Endothelial cell of umbilical vein (primary cell): ENCODE measurements at regions of chr5 and their contacts with region 1.

Region 1: GRCh38 chr5:139787568-139788293 is 7.9 kb upstream of the PSD2 start:
- DNase-seq: peak; percentile 82
- H3K4me3 ChIP-seq: peak overlapping the region; percentile 61 to 87 (median 83)
- H3K27ac ChIP-seq: no peak overlapping the region
- H3K4me1 ChIP-seq: peaks cover 3% of the 10 kb centered on the region
- H3K27me3 ChIP-seq: peaks cover 2% of the 10 kb centered on the region in 2 experiments
- CTCF ChIP-seq: peak; percentile 93 to 98
- POLR2A ChIP-seq: no peak

Region 2: GRCh38 chr5:139774980-139775661 is 12.6 kb before region 1 on chr5:
- CTCF ChIA-PET with region 1: interaction called, 64 read pairs
- POLR2A ChIA-PET with region 1: no interaction called
- dilution Hi-C with region 1: no loop called
- intact Hi-C with region 1: no loop called
- DNase-seq: peak; percentile 47
- H3K4me3 ChIP-seq: no peak overlapping the region
- H3K27ac ChIP-seq: no peak overlapping the region
- H3K4me1 ChIP-seq: no peaks in the 10 kb centered on the region
- H3K27me3 ChIP-seq: peaks cover 7 to 13% of the 10 kb centered on the region in 2 experiments
- CTCF ChIP-seq: peak; percentile 90 to 94
- POLR2A ChIP-seq: no peak

Region 3: DNA sequence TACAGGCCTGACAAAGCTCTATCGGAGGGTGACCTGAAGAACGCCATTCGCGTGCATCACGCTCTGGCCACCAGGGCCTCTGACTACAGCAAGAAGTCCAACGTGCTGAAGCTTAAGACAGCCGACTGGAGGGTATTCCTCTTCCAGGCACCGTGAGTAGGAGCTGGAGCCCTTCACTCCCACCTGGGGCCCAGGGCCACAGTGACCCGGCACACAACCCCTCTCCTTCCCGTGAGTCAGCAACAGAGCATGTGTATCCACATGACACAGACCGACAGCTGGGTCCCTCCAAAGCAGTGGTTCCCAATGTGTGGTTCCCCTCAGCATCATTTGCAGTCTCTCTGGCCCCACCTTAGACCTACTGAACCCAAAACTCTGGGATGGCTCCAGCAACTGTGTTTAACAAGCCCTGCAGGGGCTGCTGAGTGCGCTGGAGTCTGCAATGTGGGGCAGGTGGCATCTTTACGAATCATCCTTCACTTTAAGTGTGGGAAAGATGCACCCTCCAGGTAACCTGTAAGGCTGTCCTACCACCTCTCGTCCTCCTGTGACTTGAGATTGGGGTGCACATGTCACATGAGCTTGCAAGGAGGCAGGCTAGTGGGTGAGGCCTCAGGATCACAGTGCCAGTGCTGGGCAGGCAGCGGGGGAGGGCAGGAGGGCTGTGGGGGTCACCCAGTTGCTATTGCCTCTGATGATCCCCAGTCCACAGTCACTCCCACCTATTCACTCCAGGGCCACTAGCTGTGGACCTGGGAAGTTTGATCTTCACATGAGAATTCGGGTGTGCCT is 50.1 kb after region 1 on chr5:
- CTCF ChIA-PET with region 1: interaction called, 95 read pairs
- POLR2A ChIA-PET with region 1: no interaction called
- dilution Hi-C with region 1: no loop called
- intact Hi-C with region 1: no loop called
- DNase-seq: no peak
- H3K4me3 ChIP-seq: no peak overlapping the region
- H3K27ac ChIP-seq: no peak overlapping the region
- H3K4me1 ChIP-seq: no peaks in the 10 kb centered on the region
- H3K27me3 ChIP-seq: peaks cover 5 to 8% of the 10 kb centered on the region in 2 experiments
- CTCF ChIP-seq: no peak
- POLR2A ChIP-seq: no peak

Region 4: DNA sequence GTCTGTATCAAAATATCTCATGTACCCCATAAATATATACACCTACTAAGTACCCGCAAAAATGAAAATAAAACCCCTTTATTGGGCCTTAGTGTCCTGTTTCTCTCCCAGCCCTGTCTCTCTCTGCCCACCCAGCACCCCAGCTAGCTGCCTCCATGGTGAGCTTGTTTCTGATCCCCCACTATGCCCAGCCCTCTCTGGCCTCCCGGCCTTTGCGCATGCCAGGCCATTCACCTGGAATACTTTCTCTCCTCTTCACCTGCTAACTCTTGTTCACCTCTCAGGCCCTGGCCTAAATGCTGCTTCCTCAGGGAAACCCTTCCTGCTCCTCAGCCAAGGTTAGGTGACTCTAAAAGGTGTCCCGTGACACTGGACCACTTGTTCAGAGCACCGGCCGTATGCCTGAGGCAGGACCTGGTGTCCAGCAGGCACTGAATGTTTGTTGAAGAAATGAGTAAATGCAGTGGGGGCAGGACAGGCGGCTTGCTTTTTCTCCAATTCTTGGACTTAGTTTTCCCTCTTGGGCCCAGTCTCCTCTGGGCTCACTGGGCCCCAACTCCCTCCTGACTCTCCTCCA is 66.4 kb after region 1 on chr5:
- CTCF ChIA-PET with region 1: interaction called, 95 read pairs
- POLR2A ChIA-PET with region 1: no interaction called
- dilution Hi-C with region 1: no loop called
- intact Hi-C with region 1: no loop called
- DNase-seq: no peak
- H3K4me3 ChIP-seq: no peak overlapping the region
- H3K27ac ChIP-seq: no peak overlapping the region
- H3K4me1 ChIP-seq: no peaks in the 10 kb centered on the region
- H3K27me3 ChIP-seq: peaks cover 0 to 5% of the 10 kb centered on the region in 2 experiments
- CTCF ChIP-seq: no peak
- POLR2A ChIP-seq: no peak

Region 5: GRCh38 chr5:139872052-139872766 is 84.5 kb after region 1 on chr5:
- CTCF ChIA-PET with region 1: interaction called, 36 read pairs
- POLR2A ChIA-PET with region 1: no interaction called
- dilution Hi-C with region 1: no loop called
- intact Hi-C with region 1: no loop called
- DNase-seq: no peak
- H3K4me3 ChIP-seq: no peak overlapping the region
- H3K27ac ChIP-seq: no peak overlapping the region
- H3K4me1 ChIP-seq: no peaks in the 10 kb centered on the region
- H3K27me3 ChIP-seq: peaks cover 0 to 3% of the 10 kb centered on the region in 2 experiments
- CTCF ChIP-seq: no peak
- POLR2A ChIP-seq: no peak